ENCODE measurements at regions of chr1 and their contacts with region 1.

Region 1: GRCh38 chr1:67214420-67215174 is 48.3 kb downstream of the IL23R start:
- DNase-seq: peak; percentile 82
- H3K4me3 Mint-ChIP-seq: no peak overlapping the region
- H3K27ac Mint-ChIP-seq: peak overlapping the region; percentile 74
- H3K4me1 Mint-ChIP-seq: peaks cover 64% of the 10 kb centered on the region
- H3K27me3 Mint-ChIP-seq: no peaks in the 10 kb centered on the region

Region 2: GRCh38 chr1:66764994-66765578 is 449.5 kb before region 1 on chr1:
- CTCF ChIA-PET with region 1: interaction called, 5 read pairs
- intact Hi-C with region 1: loop called (anchors 1 kb)
- DNase-seq: peak; percentile 80
- H3K4me3 Mint-ChIP-seq: no peak overlapping the region
- H3K27ac Mint-ChIP-seq: no peak overlapping the region
- H3K4me1 Mint-ChIP-seq: peaks cover 22% of the 10 kb centered on the region
- H3K27me3 Mint-ChIP-seq: no peaks in the 10 kb centered on the region

Region 3: DNA sequence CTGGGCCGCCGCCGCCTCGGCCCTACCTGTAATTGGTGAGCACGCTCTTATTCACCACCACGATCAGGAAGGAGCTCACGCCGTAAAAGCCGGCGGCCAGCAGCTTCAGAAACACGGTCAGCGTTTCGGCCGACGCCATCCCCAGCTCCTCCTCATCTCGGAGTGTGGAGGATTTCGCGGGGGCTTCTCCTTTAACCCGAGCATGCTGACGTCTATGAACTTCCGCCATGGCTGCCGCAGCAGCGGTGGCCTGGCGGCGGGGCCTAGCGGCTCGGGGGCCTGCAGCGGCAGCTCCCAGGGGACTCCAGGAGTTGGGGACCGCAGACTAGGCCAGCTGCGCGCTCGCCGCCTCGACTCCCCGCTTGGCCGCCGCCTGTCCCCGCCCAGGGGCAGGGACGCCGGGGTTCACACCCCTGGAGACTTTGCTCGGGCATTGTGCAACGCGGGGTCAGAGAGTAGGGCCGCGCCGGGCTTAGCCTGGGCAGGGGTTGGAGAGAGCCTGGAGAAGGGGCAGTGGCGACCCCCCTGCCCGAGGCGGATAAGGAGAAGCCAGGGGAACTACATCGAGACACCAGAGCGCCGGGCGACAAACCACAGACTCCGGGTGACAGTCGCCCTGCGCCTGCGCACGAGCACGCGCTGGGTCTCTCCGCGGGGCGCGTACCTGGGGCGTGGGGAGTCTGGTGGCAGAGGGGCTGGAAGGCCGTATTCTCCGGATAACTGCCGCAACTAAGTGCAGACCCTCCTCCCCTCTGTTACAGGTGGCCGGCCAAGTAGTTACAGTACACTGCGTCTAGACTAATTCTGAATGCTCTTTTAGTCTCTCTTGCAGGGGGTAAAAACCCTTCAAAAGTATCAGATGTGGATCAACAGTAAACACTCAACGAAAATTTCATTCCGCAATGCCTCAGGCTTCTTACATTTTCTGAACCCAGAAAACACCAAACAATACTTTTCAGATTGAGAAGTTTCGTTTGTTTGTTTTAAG is 160.5 kb before region 1 on chr1 and contains the start of gene SLC35D1:
- CTCF ChIA-PET with region 1: interaction called, 3 read pairs
- intact Hi-C with region 1: loop called (anchors 1 kb)
- DNase-seq: peak; percentile 81
- H3K4me3 Mint-ChIP-seq: peak within 1 kb of the TSS; percentile 82
- H3K27ac Mint-ChIP-seq: peak within 1 kb of the TSS; percentile 93
- H3K4me1 Mint-ChIP-seq: peaks cover 19% of the 10 kb centered on the region
- H3K27me3 Mint-ChIP-seq: no peaks in the 10 kb centered on the region
- total RNA-seq, gene SLC35D1: 10.5 to 11.1 TPM

Region 4: DNA sequence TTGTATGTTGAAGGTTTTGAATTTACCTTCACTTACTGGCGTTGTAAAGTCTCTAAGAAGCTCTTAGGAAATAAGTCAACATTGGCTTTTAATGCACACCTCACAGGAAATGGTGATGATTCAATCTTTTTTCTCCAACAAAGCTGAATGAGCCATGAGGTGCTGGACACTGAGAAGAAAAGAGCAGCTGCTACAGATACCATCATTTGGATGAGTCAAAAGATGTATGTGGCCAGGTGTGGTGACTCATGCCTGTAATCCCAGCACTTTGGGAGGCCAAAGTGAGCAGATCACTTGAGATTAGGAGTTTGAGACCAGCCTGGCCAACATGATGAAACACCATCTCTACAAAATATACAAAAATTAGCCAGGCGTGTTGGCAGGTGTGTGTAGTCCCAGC is 51.6 kb before region 1 on chr1:
- CTCF ChIA-PET with region 1: interaction called, 147 read pairs
- intact Hi-C with region 1: loop called (anchors 1 kb)
- DNase-seq: peak; percentile 76
- H3K4me3 Mint-ChIP-seq: peak overlapping the region; percentile 42
- H3K27ac Mint-ChIP-seq: peak overlapping the region; percentile 83
- H3K4me1 Mint-ChIP-seq: peaks cover 63% of the 10 kb centered on the region
- H3K27me3 Mint-ChIP-seq: no peaks in the 10 kb centered on the region

Region 5: GRCh38 chr1:67184838-67185421 is 29.7 kb before region 1 on chr1:
- CTCF ChIA-PET with region 1: interaction called, 84 read pairs
- intact Hi-C with region 1: no loop called
- DNase-seq: no peak
- H3K4me3 Mint-ChIP-seq: no peak overlapping the region
- H3K27ac Mint-ChIP-seq: no peak overlapping the region
- H3K4me1 Mint-ChIP-seq: peaks cover 47% of the 10 kb centered on the region
- H3K27me3 Mint-ChIP-seq: no peaks in the 10 kb centered on the region

Region 6: GRCh38 chr1:67201891-67202290 is 12.7 kb before region 1 on chr1:
- CTCF ChIA-PET with region 1: interaction called, 72 read pairs
- intact Hi-C with region 1: no loop called
- DNase-seq: no peak
- H3K4me3 Mint-ChIP-seq: no peak overlapping the region
- H3K27ac Mint-ChIP-seq: no peak overlapping the region
- H3K4me1 Mint-ChIP-seq: peaks cover 12% of the 10 kb centered on the region
- H3K27me3 Mint-ChIP-seq: no peaks in the 10 kb centered on the region

Region 7: GRCh38 chr1:67430352-67431155 is 216.0 kb after region 1 on chr1 and contains the start of gene SERBP1:
- CTCF ChIA-PET with region 1: interaction called, 19 read pairs
- intact Hi-C with region 1: loop called (anchors 1 kb)
- DNase-seq: peak; percentile 97
- H3K4me3 Mint-ChIP-seq: peak within 1 kb of the TSS; percentile 97
- H3K27ac Mint-ChIP-seq: peak within 1 kb of the TSS; percentile 98
- H3K4me1 Mint-ChIP-seq: peaks cover 44% of the 10 kb centered on the region
- H3K27me3 Mint-ChIP-seq: no peaks in the 10 kb centered on the region
- total RNA-seq, gene SERBP1: 527 to 537 TPM

Measured in activated naive CD4-positive, alpha-beta T cell treated with anti-CD3 and anti-CD28 coated beads for 36 hours (primary cell).